ENCODE measurements at regions of chr12 and their contacts with region 1.

Region 1: GRCh38 chr12:30985814-30986452 is 59.4 kb downstream of the TSPAN11 start:
- DNase-seq: peak; percentile 44 to 85
- H3K4me3 ChIP-seq: no peak overlapping the region
- H3K27ac ChIP-seq: no peak overlapping the region
- H3K4me1 ChIP-seq: peaks cover 0 to 7% (median under 1%) of the 10 kb centered on the region in 4 experiments; a peak in 3 of 7 replicates
- H3K27me3 ChIP-seq: no peaks in the 10 kb centered on the region
- CTCF ChIP-seq: peak; percentile 90 to 94 (median 94)
- EP300 ChIP-seq: no peak
- POLR2A ChIP-seq: no peak
- RAD21 ChIP-seq: peak; percentile 92 to 94

Region 2: DNA sequence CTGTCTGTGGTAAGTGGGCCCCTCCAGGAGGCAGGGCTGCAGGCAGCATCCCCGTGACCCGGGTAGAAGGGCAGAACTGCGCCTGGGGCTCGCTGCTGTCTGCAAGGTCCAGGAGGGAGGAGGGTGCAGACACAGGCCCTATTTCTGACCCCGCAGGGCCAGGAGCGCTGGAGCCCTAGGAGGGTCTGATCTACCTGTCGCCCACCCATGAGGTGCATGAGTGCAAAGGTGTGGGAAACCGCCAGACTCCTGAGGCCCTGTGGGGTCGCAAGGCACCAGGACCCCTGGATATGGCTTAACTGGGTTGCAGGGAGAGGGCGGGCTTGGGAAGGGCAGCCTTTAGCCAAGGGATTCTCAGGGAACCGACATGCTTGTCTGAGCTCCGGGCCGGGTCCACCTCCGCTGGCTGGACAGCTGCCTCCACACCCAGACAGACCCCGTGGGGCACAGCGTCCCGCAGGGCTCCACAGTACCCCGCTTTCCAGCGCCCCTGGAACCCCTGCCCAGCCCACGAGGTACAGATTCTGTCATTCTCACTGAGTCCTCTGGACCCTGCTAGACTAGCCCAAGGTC is 132.3 kb before region 1 on chr12:
- CTCF ChIA-PET with region 1: interaction called, 385 read pairs
- POLR2A ChIA-PET with region 1: interaction called, 4 read pairs
- DNase-seq: no peak
- H3K4me3 ChIP-seq: no peak overlapping the region
- H3K27ac ChIP-seq: no peak overlapping the region
- H3K4me1 ChIP-seq: no peaks in the 10 kb centered on the region; a peak in 2 of 7 replicates
- H3K27me3 ChIP-seq: no peaks in the 10 kb centered on the region; a peak in 1 of 7 replicates
- CTCF ChIP-seq: no peak
- EP300 ChIP-seq: no peak
- POLR2A ChIP-seq: no peak
- RAD21 ChIP-seq: no peak

Region 3: GRCh38 chr12:30874455-30875321 is 111.2 kb before region 1 on chr12:
- CTCF ChIA-PET with region 1: interaction called, 22 read pairs
- POLR2A ChIA-PET with region 1: no interaction called
- DNase-seq: no peak
- H3K4me3 ChIP-seq: no peak overlapping the region
- H3K27ac ChIP-seq: no peak overlapping the region
- H3K4me1 ChIP-seq: no peaks in the 10 kb centered on the region; a peak in 1 of 7 replicates
- H3K27me3 ChIP-seq: no peaks in the 10 kb centered on the region; a peak in 4 of 7 replicates
- CTCF ChIP-seq: no peak
- EP300 ChIP-seq: no peak
- POLR2A ChIP-seq: no peak
- RAD21 ChIP-seq: no peak

Region 4: GRCh38 chr12:30882706-30883105 is 103.2 kb before region 1 on chr12:
- CTCF ChIA-PET with region 1: interaction called, 22 read pairs
- POLR2A ChIA-PET with region 1: interaction called, 3 read pairs
- DNase-seq: no peak
- H3K4me3 ChIP-seq: no peak overlapping the region
- H3K27ac ChIP-seq: no peak overlapping the region
- H3K4me1 ChIP-seq: no peaks in the 10 kb centered on the region
- H3K27me3 ChIP-seq: peaks cover 0 to 5% (median 0%) of the 10 kb centered on the region in 4 experiments; a peak in 1 of 7 replicates
- CTCF ChIP-seq: peak in 1 of 3 experiments; percentile 13; a peak in 1 of 4 replicates
- EP300 ChIP-seq: no peak
- POLR2A ChIP-seq: no peak
- RAD21 ChIP-seq: peak; percentile 35 to 45

Region 5: DNA sequence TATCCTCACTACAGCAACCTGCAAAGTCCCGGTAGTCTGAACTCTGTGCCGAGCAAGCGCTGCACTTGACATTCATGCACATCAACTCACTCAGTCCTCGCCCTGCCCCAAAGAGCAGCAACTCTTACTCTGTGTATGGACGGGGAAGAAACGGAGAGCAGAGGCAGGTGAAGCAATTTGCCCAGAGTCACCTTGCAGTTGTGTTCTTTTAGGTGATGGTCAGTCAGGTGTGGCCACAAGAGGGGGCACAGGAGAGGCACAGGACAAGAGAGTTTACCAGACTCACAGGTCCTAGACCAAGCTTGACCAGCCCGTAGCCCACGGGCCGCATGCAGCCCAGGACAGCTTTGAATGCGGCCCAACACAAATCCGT is 20.3 kb before region 1 on chr12:
- CTCF ChIA-PET with region 1: interaction called, 205 read pairs
- POLR2A ChIA-PET with region 1: interaction called, 3 read pairs
- DNase-seq: peak in 1 of 2 experiments; percentile 57
- H3K4me3 ChIP-seq: no peak overlapping the region
- H3K27ac ChIP-seq: no peak overlapping the region
- H3K4me1 ChIP-seq: no peaks in the 10 kb centered on the region
- H3K27me3 ChIP-seq: peaks cover 0 to 5% (median 0%) of the 10 kb centered on the region in 4 experiments; a peak in 2 of 7 replicates
- CTCF ChIP-seq: peak; percentile 63 to 79 (median 76)
- EP300 ChIP-seq: no peak
- POLR2A ChIP-seq: no peak
- RAD21 ChIP-seq: peak; percentile 52 to 67

Region 6: DNA sequence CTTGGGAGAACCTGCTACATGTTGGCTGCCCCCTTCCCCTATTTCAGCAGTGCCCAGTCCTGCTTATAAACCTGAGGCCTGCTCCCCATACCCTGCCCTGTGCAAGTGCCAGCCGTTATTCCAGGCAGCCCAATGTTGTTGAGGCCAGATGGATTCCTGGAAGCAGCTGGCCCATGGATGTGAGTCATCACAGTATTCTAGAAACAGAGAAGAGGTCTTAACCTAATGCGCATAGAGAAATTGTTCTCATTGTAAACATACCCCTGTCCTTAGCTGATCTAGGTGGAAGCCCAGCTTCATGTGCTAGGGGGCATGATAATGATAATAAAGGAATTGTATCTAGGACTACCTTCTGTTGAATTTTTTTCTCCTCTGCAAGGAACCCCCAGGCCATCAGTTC is 10.3 kb after region 1 on chr12:
- CTCF ChIA-PET with region 1: interaction called, 166 read pairs
- POLR2A ChIA-PET with region 1: interaction called, 3 read pairs
- DNase-seq: no peak
- H3K4me3 ChIP-seq: no peak overlapping the region
- H3K27ac ChIP-seq: no peak overlapping the region
- H3K4me1 ChIP-seq: no peaks in the 10 kb centered on the region; a peak in 1 of 7 replicates
- H3K27me3 ChIP-seq: no peaks in the 10 kb centered on the region; a peak in 1 of 7 replicates
- CTCF ChIP-seq: no peak
- EP300 ChIP-seq: no peak
- POLR2A ChIP-seq: no peak
- RAD21 ChIP-seq: no peak